SK-N-SH (cell line): ENCODE measurements at regions of chr7 and their contacts with region 1.

Region 1: DNA sequence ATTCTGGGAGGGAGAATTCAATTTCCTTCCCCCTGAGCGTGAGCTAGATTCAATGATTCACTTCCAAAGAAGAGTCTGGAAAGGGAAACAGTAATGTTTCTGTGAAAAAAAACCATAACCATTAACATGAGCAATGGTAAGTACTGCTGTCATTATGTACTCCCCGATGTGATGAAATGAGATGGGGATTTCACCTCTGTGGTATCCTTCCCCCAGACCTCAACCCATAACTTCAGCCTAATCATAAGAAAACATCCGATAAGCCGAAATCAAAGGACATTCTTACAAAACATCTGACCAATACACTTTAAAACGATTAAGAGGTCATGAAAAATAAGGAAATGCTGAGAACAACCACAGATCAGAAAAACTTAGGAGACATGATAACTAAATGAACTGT is 27.2 kb downstream of the EZH2 start:
- DNase-seq: no peak
- H3K4me3 ChIP-seq: no peak overlapping the region
- H3K27ac ChIP-seq: no peak overlapping the region; a peak in 1 of 4 replicates
- H3K4me1 ChIP-seq: peaks cover 0 to 6% of the 10 kb centered on the region in 2 experiments; a peak in 2 of 4 replicates
- H3K27me3 ChIP-seq: no peaks in the 10 kb centered on the region
- CTCF ChIP-seq: no peak
- EP300 ChIP-seq: no peak
- RAD21 ChIP-seq: no peak

Region 2: GRCh38 chr7:148819697-148820360 is 37.1 kb before region 1 on chr7:
- CTCF ChIA-PET with region 1: interaction called, 13 read pairs
- POLR2A ChIA-PET with region 1: no interaction called
- DNase-seq: no peak
- H3K4me3 ChIP-seq: no peak overlapping the region
- H3K27ac ChIP-seq: peak overlapping the region; percentile 48 to 55; a peak in 3 of 4 replicates
- H3K4me1 ChIP-seq: peaks cover 9 to 20% of the 10 kb centered on the region in 2 experiments
- H3K27me3 ChIP-seq: no peaks in the 10 kb centered on the region
- CTCF ChIP-seq: no peak
- EP300 ChIP-seq: no peak
- RAD21 ChIP-seq: no peak

Region 3: GRCh38 chr7:148835854-148836253 is 21.0 kb before region 1 on chr7:
- CTCF ChIA-PET with region 1: interaction called, 15 read pairs
- POLR2A ChIA-PET with region 1: no interaction called
- DNase-seq: no peak
- H3K4me3 ChIP-seq: no peak overlapping the region
- H3K27ac ChIP-seq: no peak overlapping the region
- H3K4me1 ChIP-seq: peaks cover 0 to 4% of the 10 kb centered on the region in 2 experiments; a peak in 2 of 4 replicates
- H3K27me3 ChIP-seq: no peaks in the 10 kb centered on the region
- CTCF ChIP-seq: no peak
- EP300 ChIP-seq: no peak
- RAD21 ChIP-seq: no peak

Region 4: GRCh38 chr7:148867596-148868377 is 10.9 kb after region 1 on chr7:
- CTCF ChIA-PET with region 1: interaction called, 28 read pairs
- POLR2A ChIA-PET with region 1: no interaction called
- DNase-seq: no peak
- H3K4me3 ChIP-seq: no peak overlapping the region
- H3K27ac ChIP-seq: no peak overlapping the region
- H3K4me1 ChIP-seq: peaks cover 2% of the 10 kb centered on the region in 2 experiments; a peak in 2 of 4 replicates
- H3K27me3 ChIP-seq: no peaks in the 10 kb centered on the region
- CTCF ChIP-seq: no peak
- EP300 ChIP-seq: no peak
- RAD21 ChIP-seq: no peak

Region 5: DNA sequence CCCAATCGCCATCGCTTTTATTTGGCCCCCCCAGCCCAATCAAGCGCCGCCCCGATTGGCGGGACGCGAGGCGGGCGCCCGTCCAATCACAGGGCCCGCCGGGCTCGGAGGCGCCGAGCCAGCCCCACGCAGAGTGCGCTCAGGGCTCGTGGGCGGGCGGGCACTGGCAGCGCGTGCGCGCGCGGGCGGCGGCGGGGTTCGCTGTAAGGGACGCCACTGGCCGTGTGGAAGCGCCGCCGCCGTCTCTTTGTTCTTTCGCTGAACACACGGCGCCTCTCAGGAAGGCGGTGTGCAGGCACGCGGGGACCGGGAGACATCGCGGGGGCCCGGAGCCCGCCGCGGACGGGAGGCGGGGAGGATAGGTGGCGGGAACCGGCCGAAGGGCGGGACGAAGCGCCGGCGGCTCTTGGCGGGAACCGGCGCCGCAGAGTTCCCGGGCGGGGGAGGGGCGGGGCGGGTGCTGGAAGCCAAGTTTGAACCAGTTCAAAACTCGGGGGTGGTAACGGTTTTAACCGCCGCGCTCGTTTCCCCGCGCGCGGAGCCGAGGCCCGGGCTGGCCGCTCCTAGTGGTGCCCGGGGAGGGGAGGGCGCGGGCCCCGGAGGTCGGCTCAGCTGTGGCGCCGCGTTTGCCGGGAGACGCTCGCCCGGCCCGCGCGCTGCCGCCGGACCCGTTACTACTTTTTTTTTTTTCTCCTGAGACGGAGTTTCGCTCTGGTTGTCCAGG is 27.6 kb after region 1 on chr7:
- CTCF ChIA-PET with region 1: interaction called, 18 read pairs
- POLR2A ChIA-PET with region 1: no interaction called
- DNase-seq: peak; percentile 100
- H3K4me3 ChIP-seq: peak overlapping the region; percentile 75 to 92
- H3K27ac ChIP-seq: peak overlapping the region; percentile 75 to 94
- H3K4me1 ChIP-seq: peaks cover 0 to 8% of the 10 kb centered on the region in 2 experiments; a peak in 2 of 4 replicates
- H3K27me3 ChIP-seq: no peaks in the 10 kb centered on the region
- CTCF ChIP-seq: no peak
- EP300 ChIP-seq: peak in 1 of 2 experiments; percentile 73; a peak in 1 of 4 replicates
- RAD21 ChIP-seq: no peak

Region 6: GRCh38 chr7:148894591-148894990 is 37.7 kb after region 1 on chr7:
- CTCF ChIA-PET with region 1: interaction called, 18 read pairs
- POLR2A ChIA-PET with region 1: no interaction called
- DNase-seq: no peak
- H3K4me3 ChIP-seq: no peak overlapping the region
- H3K27ac ChIP-seq: no peak overlapping the region
- H3K4me1 ChIP-seq: no peaks in the 10 kb centered on the region
- H3K27me3 ChIP-seq: no peaks in the 10 kb centered on the region
- CTCF ChIP-seq: no peak
- EP300 ChIP-seq: no peak
- RAD21 ChIP-seq: no peak

Region 7: GRCh38 chr7:148940702-148941597 is 84.1 kb after region 1 on chr7:
- CTCF ChIA-PET with region 1: interaction called, 23 read pairs
- POLR2A ChIA-PET with region 1: no interaction called
- DNase-seq: peak; percentile 88
- H3K4me3 ChIP-seq: peak overlapping the region; percentile 65 to 83
- H3K27ac ChIP-seq: peak overlapping the region; percentile 76 to 91
- H3K4me1 ChIP-seq: peaks cover 0 to 6% of the 10 kb centered on the region in 2 experiments; a peak in 2 of 4 replicates
- H3K27me3 ChIP-seq: no peaks in the 10 kb centered on the region
- CTCF ChIP-seq: no peak
- EP300 ChIP-seq: peak in 1 of 2 experiments; percentile 59; a peak in 1 of 4 replicates
- RAD21 ChIP-seq: 0 out of 2 replicates have a peak, but pooled peaks have one; percentile 10

Region 8: GRCh38 chr7:149229526-149229925 is 372.6 kb after region 1 on chr7:
- CTCF ChIA-PET with region 1: no interaction called
- POLR2A ChIA-PET with region 1: no interaction called
- DNase-seq: no peak
- H3K4me3 ChIP-seq: no peak overlapping the region
- H3K27ac ChIP-seq: no peak overlapping the region
- H3K4me1 ChIP-seq: peaks cover 0 to 15% of the 10 kb centered on the region in 2 experiments; a peak in 3 of 4 replicates
- H3K27me3 ChIP-seq: no peaks in the 10 kb centered on the region
- CTCF ChIP-seq: no peak
- EP300 ChIP-seq: no peak
- RAD21 ChIP-seq: no peak